Mucosa of descending colon (tissue), 3 donors: ENCODE measurements at regions of chr4 and their contacts with region 1.

Region 1: DNA sequence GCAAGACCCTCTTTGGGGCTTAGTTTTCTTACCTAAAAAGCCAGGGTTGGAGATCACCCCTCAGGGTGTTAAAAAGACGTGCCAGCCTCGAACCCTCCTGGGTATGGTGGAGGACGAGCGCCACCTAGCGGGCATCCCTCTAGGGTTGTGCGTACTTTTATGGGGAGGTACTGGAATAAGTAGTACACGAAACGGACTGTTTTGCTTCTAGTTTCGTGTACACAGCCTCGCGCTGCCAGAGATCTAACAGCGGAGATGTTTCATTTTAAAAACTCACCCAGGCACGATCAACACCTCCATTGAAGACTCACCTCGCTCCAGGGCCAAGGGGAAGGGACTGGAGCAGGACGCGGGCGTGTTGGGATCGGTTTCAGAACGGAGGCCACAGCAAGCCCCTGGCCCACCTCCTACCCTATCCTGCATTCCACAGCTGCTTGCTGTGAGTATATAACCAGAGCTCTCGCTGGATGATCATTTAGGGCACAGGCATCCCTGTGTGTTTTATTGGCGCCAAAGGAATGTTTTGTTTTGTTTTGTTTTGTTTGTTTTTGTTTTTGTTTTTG is 4.8 kb upstream of the NKX3-2 start:
- DNase-seq: peak in 2 of 3 donors; percentile 91 to 95
- ATAC-seq: peak; percentile 70
- H3K4me3 ChIP-seq: no peak overlapping the region
- H3K4me1 ChIP-seq: peaks cover 16% of the 10 kb centered on the region
- CTCF ChIP-seq: peak; percentile 63

Region 2: DNA sequence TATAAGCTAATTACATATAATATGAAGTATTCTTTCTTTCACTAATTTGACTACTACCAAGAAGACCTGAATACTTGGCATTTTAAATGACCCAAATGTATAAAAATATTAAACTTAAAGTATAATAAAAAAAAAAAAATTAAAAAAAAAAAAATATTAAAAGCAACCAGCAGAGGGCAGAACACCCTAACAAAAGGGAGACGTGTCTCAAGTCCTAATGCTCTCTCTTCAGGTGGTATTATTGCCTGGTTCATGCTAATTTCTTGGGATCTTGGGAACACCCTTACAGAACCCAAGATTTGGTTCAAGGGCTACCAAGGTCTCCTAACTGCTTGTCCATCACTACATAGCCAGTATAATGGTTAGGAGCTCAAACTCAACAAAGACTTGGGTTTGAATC is 819.7 kb before region 1 on chr4:
- intact Hi-C with region 1: loop called (anchors 5 kb)
- DNase-seq: no peak
- ATAC-seq: no peak
- H3K4me3 ChIP-seq: no peak overlapping the region
- H3K4me1 ChIP-seq: no peaks in the 10 kb centered on the region
- CTCF ChIP-seq: no peak

Region 3: DNA sequence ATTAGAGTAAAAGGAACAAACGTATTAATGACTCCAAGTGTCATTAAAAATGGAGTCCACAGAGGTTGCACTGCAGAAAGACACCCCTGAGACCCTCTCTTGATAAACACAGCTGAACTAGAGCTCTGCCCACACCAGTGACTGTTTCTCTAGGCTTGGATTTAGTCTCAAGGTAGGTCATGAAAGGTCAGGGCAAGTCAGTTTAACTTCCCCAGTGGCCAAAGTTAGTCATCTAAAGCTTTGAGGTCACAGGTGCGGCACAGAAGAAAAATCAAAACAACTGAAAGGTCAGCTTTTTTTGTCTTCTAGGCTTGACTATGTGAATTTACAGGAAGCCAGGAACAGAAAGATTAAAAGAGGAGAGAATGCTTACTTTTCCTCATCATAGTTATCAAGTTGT is 814.5 kb before region 1 on chr4:
- intact Hi-C with region 1: loop called (anchors 5 kb)
- DNase-seq: no peak
- ATAC-seq: no peak
- H3K4me3 ChIP-seq: no peak overlapping the region
- H3K4me1 ChIP-seq: no peaks in the 10 kb centered on the region
- CTCF ChIP-seq: no peak

Region 4: DNA sequence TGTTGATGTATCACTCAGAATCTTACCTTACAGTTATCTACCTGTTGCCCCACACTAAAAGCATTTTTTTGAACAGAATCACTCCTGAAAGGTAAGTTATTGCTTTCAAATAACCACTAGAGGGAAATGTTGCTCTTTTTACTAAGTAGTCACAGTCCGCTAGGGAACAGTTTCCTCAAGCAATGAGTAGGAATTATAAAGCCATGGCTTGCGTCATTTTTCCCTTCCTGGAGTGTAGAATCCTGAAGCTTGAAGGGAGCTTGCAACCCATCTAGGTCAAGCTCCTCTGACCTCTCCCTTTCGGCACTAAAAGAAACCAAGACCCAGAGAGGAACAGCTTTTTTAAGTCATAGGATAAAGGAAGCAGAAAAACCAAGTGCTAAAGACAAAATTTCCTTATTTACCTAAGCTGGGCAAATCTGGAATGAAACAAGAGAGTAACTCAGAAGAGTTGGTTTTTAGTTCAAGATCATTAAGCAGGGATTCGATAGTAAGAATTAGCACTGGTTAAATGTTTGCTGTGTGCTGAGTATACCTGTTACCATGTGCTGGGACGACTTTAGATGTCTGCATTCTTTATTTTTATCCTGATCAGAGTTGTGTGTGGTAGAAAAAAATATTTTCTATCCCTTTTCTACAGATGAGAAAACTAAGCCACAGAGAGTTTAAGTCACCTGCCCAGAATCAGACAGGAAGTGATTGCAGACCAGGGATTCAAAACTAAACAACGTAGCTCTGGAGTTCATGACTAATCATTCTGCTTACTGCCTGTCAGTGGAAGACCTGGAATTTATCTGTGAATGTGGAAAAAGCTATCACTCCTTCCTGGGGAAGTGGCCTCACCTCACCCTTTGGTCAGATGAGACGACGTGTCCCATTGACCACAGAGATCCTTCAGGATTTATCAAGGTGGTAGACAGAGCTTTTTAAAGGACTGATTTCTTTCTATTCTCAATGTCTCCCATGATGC is 696.4 kb before region 1 on chr4:
- intact Hi-C with region 1: loop called (anchors 5 kb)
- DNase-seq: peak in 1 of 3 donors; percentile 21
- ATAC-seq: peak; percentile 63
- H3K4me3 ChIP-seq: no peak overlapping the region
- H3K4me1 ChIP-seq: no peaks in the 10 kb centered on the region
- CTCF ChIP-seq: peak; percentile 11